Activated CD4-positive, alpha-beta T cell treated with anti-CD3 and anti-CD28 coated beads, Interleukin-2, amount 10 ng/mL, durations not matched to agents 24 days and 14 days (primary cell): ENCODE measurements at regions of chrX and their contacts with region 1.

Region 1: GRCh38 chrX:13000301-13000811 is 25.4 kb downstream of the TMSB4X start:
- DNase-seq: peak; percentile 78
- H3K4me3 Mint-ChIP-seq: peak overlapping the region; percentile 75
- H3K27ac Mint-ChIP-seq: peak overlapping the region; percentile 95
- H3K4me1 Mint-ChIP-seq: peaks cover 55% of the 10 kb centered on the region
- H3K27me3 Mint-ChIP-seq: no peaks in the 10 kb centered on the region

Region 2: GRCh38 chrX:11998944-11999343 is 1001.4 kb before region 1 on chrX:
- intact Hi-C with region 1: no loop called
- DNase-seq: no peak
- H3K4me3 Mint-ChIP-seq: no peak overlapping the region
- H3K27ac Mint-ChIP-seq: no peak overlapping the region
- H3K4me1 Mint-ChIP-seq: no peaks in the 10 kb centered on the region
- H3K27me3 Mint-ChIP-seq: peaks cover 2% of the 10 kb centered on the region

Region 3: DNA sequence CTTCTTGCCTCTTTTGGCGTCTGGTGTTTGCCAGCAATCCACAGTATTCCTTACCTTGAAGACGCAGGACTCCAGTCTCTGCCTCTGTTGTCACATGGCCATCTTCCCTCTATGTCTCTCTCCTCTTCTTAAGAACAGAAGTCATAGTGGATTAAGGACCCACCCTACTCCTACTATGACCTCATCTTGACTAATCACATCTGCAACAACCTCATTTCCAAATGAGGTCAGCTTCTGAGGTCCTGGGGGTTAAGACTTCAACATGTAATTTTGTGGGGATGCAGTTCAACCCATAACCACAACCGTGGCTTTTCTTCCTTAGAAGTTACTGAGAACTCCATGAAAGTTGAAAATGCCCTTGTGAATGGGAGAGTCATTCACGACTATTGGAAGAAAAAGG is 70.7 kb before region 1 on chrX:
- intact Hi-C with region 1: no loop called
- DNase-seq: no peak
- H3K4me3 Mint-ChIP-seq: no peak overlapping the region
- H3K27ac Mint-ChIP-seq: no peak overlapping the region
- H3K4me1 Mint-ChIP-seq: peaks cover 2% of the 10 kb centered on the region
- H3K27me3 Mint-ChIP-seq: no peaks in the 10 kb centered on the region

Region 4: DNA sequence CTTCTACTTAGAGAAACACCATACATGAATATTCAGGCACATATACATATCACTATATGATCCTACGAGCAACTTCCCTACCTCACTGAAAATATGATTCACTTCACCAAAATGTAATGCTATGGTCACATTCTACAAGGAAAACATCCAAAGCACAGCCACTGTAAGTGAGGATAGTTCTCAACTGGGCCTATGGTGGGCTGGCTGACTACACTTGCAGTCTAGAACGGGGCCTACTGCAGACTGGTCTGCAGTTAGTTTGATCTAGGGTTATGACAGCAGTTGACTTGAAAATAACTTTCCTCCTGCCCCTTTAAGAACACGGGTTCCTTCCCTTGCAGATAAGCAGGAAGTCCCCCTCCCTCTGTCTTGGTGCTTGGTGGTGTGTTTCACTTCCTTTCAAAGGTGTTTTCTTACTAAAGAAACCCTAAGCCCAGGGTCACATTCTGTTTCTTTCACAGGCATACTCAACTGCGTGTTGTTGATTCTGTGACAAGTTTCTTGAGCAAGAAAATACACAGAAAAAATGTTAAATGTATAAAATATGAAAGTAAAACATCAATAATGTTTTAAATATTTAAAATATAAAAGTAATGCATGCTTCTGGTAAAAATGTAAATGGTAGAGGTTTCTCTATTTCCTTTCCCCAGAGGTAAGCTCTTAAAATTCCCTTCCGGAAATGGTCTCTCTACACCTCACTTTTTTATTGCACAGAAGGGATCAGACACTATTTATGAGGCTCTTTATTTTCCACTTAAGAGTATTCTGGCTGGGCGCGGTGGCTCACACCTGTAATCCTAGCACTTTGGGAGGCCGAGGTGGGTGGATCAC is 43.4 kb before region 1 on chrX:
- intact Hi-C with region 1: no loop called
- DNase-seq: peak; percentile 88
- H3K4me3 Mint-ChIP-seq: peak overlapping the region; percentile 90
- H3K27ac Mint-ChIP-seq: peak overlapping the region; percentile 98
- H3K4me1 Mint-ChIP-seq: peaks cover 54% of the 10 kb centered on the region
- H3K27me3 Mint-ChIP-seq: no peaks in the 10 kb centered on the region

Region 5: GRCh38 chrX:12984629-12985319 is 15.6 kb before region 1 on chrX:
- intact Hi-C with region 1: loop called (anchors 1 kb)
- DNase-seq: peak; percentile 90
- H3K4me3 Mint-ChIP-seq: peak overlapping the region; percentile 62
- H3K27ac Mint-ChIP-seq: peak overlapping the region; percentile 94
- H3K4me1 Mint-ChIP-seq: peaks cover 57% of the 10 kb centered on the region
- H3K27me3 Mint-ChIP-seq: no peaks in the 10 kb centered on the region

Region 6: DNA sequence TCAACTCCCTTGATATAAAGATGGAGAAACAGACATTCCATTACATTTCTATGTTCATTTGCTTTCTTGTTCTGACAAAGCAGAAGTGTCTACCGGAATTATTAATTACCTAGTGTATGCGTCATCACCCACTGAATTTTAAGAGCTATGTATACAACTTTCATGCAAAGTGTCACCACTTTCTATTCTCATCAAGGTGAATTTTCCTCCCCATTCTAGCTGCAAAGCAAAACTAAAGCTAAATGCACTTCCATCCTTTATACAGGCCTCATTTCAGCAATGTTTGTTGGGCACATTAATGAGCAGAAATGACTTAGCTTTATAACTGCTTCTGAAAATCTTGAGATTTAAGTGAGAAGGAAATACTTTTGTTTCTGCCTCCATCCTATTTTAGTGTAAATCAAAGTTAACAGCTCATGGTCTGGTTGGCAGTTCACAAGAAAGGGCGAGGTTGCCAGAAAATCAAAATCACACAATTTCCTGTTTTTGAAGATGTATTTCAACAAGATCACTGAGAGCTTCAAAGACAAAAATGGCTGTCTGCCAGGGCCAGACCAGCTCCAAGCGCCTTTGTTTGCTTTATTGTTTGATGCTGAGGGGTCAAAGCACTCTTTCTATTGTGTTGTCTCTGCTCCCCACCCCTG is 51.3 kb after region 1 on chrX:
- intact Hi-C with region 1: loop called (anchors 1 kb)
- DNase-seq: peak; percentile 75
- H3K4me3 Mint-ChIP-seq: peak overlapping the region; percentile 39
- H3K27ac Mint-ChIP-seq: peak overlapping the region; percentile 87
- H3K4me1 Mint-ChIP-seq: peaks cover 45% of the 10 kb centered on the region
- H3K27me3 Mint-ChIP-seq: no peaks in the 10 kb centered on the region

Region 7: DNA sequence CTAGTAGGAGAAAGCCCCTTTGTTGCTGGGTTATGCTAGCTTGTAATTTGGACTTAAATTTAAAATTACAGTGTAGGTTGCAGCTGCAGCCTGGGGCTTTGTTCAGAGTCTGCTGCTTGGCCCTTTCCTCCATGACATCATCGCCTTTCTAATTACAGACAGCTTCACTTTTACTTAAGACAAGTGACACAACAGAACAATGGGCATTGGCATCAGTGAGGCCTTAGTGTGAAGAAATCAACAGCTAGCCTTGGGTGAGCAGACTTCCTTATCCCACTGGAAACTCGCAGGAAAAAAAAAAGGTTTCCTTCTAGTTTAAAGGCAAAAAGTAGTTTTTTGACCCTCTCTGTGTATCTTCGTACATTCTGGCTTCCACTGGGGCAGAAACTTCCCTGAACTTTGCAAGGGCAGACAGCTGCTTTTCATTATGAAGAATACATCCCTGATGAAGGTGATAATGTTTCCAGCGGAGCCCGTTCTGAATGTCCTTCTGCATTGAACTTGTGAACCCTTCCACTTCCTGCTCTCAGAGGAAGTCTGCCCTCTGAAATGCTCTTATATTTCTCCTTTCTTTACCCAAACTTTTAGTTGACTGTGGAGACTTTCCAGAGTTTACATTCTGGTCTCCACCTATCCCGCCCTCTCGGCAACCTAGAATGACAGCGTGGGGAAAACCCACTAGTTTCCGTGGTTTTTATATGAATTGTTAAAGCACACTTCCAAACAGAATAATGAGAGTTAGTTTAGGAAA is 167.3 kb after region 1 on chrX:
- intact Hi-C with region 1: loop called (anchors 5 kb)
- DNase-seq: peak; percentile 62
- H3K4me3 Mint-ChIP-seq: peak overlapping the region; percentile 56
- H3K27ac Mint-ChIP-seq: peak overlapping the region; percentile 79
- H3K4me1 Mint-ChIP-seq: peaks cover 19% of the 10 kb centered on the region
- H3K27me3 Mint-ChIP-seq: no peaks in the 10 kb centered on the region